ENCODE measurements at regions of chrX and their contacts with region 1.

Region 1: DNA sequence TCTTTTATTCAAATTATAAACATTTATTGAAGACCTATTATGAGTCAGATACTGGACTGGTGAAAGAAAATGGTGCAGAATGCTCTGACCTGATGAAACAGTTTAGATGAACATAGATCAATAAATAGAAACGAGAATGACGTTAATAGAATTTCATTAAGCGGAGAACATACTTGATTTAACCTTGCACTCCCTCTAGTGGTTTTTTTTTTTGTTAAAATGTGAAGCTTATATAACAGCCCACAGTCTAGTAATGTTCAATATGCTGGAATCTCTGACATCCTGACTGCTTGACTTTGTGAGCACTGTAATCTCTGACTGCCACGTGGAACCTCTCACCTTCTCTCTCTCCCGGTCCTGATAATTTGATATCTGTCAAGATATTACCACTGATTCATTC is 32.3 kb downstream of the HDAC8 start:
- DNase-seq: no peak
- ATAC-seq: no peak
- H3K4me3 ChIP-seq: no peak overlapping the region
- H3K27ac ChIP-seq: no peak overlapping the region
- H3K4me1 ChIP-seq: peaks cover 0 to 3% of the 10 kb centered on the region in 2 donors
- H3K27me3 ChIP-seq: no peaks in the 10 kb centered on the region

Region 2: GRCh38 chrX:72245461-72246089 is 294.7 kb before region 1 on chrX:
- intact Hi-C with region 1: loop called in 1 of 2 experiments (anchors 5 kb)
- DNase-seq: peak; percentile 55 to 81
- ATAC-seq: peak; percentile 67
- H3K4me3 ChIP-seq: no peak overlapping the region
- H3K27ac ChIP-seq: no peak overlapping the region
- H3K4me1 ChIP-seq: no peaks in the 10 kb centered on the region
- H3K27me3 ChIP-seq: no peaks in the 10 kb centered on the region

Region 3: GRCh38 chrX:72306851-72307645 is 233.3 kb before region 1 on chrX:
- intact Hi-C with region 1: loop called in 1 of 2 experiments (anchors 10 kb)
- DNase-seq: peak; percentile 80 to 85
- ATAC-seq: peak; percentile 77
- H3K4me3 ChIP-seq: peak overlapping the region; percentile 61 to 88
- H3K27ac ChIP-seq: no peak overlapping the region
- H3K4me1 ChIP-seq: no peaks in the 10 kb centered on the region
- H3K27me3 ChIP-seq: no peaks in the 10 kb centered on the region

Region 4: GRCh38 chrX:72371405-72371804 is 168.9 kb before region 1 on chrX:
- intact Hi-C with region 1: no loop called
- DNase-seq: no peak
- ATAC-seq: no peak
- H3K4me3 ChIP-seq: no peak overlapping the region
- H3K27ac ChIP-seq: no peak overlapping the region
- H3K4me1 ChIP-seq: no peaks in the 10 kb centered on the region
- H3K27me3 ChIP-seq: no peaks in the 10 kb centered on the region

Region 5: GRCh38 chrX:72381439-72382201 is 158.7 kb before region 1 on chrX:
- intact Hi-C with region 1: loop called in 1 of 2 experiments (anchors 10 kb)
- DNase-seq: no peak
- ATAC-seq: peak; percentile 80
- H3K4me3 ChIP-seq: no peak overlapping the region
- H3K27ac ChIP-seq: no peak overlapping the region
- H3K4me1 ChIP-seq: no peaks in the 10 kb centered on the region
- H3K27me3 ChIP-seq: no peaks in the 10 kb centered on the region

Measured in aorta (tissue), 5 donors.